CD8-positive, alpha-beta T cell (primary cell): ENCODE measurements at regions of chr22 and their contacts with region 1.

Region 1: DNA sequence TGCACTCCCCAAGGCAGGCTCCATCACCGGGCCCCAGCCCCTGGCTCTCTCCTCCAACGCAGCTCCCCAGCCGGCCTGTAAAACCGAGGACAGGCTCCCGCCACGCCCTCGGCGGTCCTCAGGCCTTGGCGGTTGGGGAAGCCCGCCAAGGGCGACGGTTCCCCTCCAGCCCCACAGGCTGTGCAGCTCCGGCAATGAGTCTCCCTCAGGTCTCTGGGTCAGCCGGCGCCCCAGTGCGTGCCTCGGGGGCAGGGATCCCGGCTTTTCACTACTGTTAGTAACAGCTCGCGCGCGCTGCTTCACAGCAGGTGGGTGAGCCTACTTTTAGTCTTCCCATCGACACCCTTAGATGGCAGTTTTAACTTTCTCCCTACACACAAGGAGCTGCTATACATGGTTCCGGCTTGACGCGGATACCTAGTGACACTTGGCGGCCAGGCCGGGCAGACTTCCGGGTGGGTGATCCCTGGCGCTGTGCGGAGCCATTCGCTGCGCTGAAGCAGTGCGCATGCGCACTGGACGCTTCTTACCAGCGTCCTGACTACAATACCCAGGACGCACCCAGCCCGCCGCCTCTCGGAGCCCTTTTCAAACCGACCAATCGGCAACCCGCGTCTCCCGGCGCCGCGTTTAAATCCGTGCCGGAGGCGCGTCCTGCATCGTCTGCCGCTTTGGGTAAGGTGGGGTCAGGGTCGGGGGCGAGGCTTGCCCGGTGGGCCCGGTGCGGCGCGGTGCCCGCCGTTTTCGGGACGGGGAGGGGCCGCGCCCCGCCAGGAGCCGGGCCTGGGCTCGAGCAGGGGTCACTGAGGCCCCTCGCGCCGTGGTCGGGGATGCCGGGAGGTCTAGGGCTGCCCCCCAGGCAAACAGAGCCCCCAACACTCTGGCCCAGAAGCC is at the start of gene GTSE1:
- DNase-seq: peak; percentile 94 to 100 (median 97)
- ATAC-seq: peak; percentile 97
- H3K4me3 ChIP-seq: peak within 1 kb of the TSS; percentile 61 to 63
- H3K4me3 Mint-ChIP-seq: peak within 1 kb of the TSS; percentile 89
- H3K27ac ChIP-seq: peak within 1 kb of the TSS; percentile 74 to 94
- H3K27ac Mint-ChIP-seq: peak within 1 kb of the TSS; percentile 98
- H3K4me1 ChIP-seq: peaks cover 24% of the 10 kb centered on the region
- H3K4me1 Mint-ChIP-seq: peaks cover 21% of the 10 kb centered on the region
- H3K27me3 ChIP-seq: no peaks in the 10 kb centered on the region
- H3K27me3 Mint-ChIP-seq: peaks cover 14% of the 10 kb centered on the region
- CTCF ChIP-seq: peak; percentile 29
- total RNA-seq, gene GTSE1: 0.19 to 0.30 TPM

Region 2: DNA sequence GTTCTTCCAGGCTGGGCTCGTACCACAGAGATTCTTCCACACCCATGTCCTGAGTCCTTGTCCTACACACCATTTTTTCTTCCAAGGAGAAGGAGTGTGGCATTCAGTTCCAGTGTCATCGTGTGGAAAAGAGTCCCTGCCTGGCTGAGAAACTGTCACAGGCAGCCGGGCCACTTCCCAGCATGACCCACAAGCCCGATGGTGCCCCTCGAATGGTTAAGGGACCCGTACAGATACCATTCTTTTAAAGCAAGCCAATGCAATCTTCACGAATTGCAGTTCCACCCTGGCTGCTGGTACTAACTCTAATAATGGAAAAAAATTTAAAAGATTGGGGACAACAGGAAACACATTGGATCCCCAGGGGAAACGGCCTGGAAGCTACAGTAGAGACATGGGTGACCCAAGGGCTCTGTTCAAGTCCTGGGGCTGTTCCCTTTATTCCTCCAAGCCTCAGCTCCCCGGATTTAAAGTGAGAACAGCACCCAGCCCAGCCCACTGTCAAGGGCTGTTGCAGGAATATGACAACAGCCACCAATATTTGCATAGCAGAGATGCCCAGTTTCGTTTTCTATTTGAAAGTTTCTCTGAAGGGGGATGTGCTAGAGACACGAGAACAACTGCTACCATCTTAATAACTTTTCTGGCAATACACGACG is 238.6 kb before region 1 on chr22:
- CTCF ChIA-PET with region 1: no interaction called
- POLR2A ChIA-PET with region 1: no interaction called
- intact Hi-C with region 1: loop called in 1 of 2 experiments (anchors 5 kb)
- DNase-seq: peak in 3 of 9 experiments; percentile 27 to 61 (median 44)
- ATAC-seq: peak; percentile 55
- H3K4me3 ChIP-seq: no peak overlapping the region
- H3K4me3 Mint-ChIP-seq: peak overlapping the region; percentile 54
- H3K27ac ChIP-seq: peak overlapping the region in 1 of 2 experiments; percentile 45
- H3K27ac Mint-ChIP-seq: peak overlapping the region; percentile 86
- H3K4me1 ChIP-seq: peaks cover 35% of the 10 kb centered on the region
- H3K4me1 Mint-ChIP-seq: peaks cover 38% of the 10 kb centered on the region
- H3K27me3 ChIP-seq: no peaks in the 10 kb centered on the region
- H3K27me3 Mint-ChIP-seq: peaks cover 7% of the 10 kb centered on the region
- CTCF ChIP-seq: no peak

Region 3: GRCh38 chr22:46150034-46150654 is 146.4 kb before region 1 on chr22 and contains the start of gene PPARA:
- CTCF ChIA-PET with region 1: no interaction called
- POLR2A ChIA-PET with region 1: interaction called, 4 read pairs
- intact Hi-C with region 1: loop called (anchors 1 kb)
- DNase-seq: peak; percentile 60 to 93 (median 89)
- ATAC-seq: peak; percentile 77
- H3K4me3 ChIP-seq: peak within 1 kb of the TSS; percentile 82 to 91
- H3K4me3 Mint-ChIP-seq: peak within 1 kb of the TSS; percentile 83
- H3K27ac ChIP-seq: peak within 1 kb of the TSS; percentile 46 to 60
- H3K27ac Mint-ChIP-seq: peak within 1 kb of the TSS; percentile 89
- H3K4me1 ChIP-seq: peaks cover 21% of the 10 kb centered on the region
- H3K4me1 Mint-ChIP-seq: peaks cover 20% of the 10 kb centered on the region
- H3K27me3 ChIP-seq: no peaks in the 10 kb centered on the region
- H3K27me3 Mint-ChIP-seq: no peaks in the 10 kb centered on the region
- CTCF ChIP-seq: no peak
- total RNA-seq, gene PPARA: 4.4 to 6.9 TPM

Region 4: DNA sequence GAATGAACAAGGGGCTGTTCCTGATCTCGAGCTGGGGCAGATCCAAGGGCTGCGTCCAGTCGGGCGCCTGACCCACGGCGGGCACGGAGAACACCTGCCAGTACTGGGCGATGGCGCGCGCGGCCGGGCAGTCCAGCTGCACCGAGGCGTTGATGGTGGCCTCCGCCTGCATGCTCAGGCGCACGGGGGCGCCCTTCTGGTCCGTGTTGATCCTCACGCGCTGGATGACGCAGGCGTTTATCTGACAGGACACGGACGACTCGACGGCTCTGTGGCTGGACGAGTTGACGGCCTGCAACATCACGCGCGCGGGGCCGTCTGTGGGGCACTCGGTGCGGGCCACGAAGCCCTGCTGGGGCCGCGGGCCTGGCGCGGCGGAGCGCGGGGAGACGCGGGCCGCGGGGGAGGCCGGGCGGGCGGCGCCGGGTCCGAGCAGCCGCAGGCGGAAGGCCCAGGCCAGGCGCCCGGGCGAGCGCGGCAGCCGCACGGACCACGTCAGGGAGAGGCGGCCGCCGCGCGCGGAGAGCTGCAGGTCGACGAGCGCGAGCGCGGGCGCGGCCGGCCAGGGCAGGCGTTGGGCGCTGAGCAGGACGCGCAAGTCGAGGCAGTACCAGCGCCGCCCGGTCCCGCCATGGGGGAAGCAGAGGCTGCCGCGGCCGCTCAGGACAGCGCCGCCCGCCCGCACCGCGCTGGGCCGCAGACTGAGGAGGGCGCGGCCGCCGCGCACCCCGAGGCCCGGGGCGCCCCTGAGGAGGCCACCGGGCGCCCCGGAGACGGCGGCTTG is 33.9 kb before region 1 on chr22:
- CTCF ChIA-PET with region 1: no interaction called
- POLR2A ChIA-PET with region 1: interaction called, 6 read pairs
- intact Hi-C with region 1: loop called (anchors 1 to 2 kb)
- DNase-seq: peak in 4 of 9 experiments; percentile 33 to 75 (median 53)
- ATAC-seq: peak; percentile 49
- H3K4me3 ChIP-seq: no peak overlapping the region
- H3K4me3 Mint-ChIP-seq: peak overlapping the region; percentile 51
- H3K27ac ChIP-seq: no peak overlapping the region
- H3K27ac Mint-ChIP-seq: no peak overlapping the region
- H3K4me1 ChIP-seq: peaks cover 3% of the 10 kb centered on the region
- H3K4me1 Mint-ChIP-seq: peaks cover 15% of the 10 kb centered on the region
- H3K27me3 ChIP-seq: peaks cover 0 to 4% of the 10 kb centered on the region in 2 experiments
- H3K27me3 Mint-ChIP-seq: peaks cover 45% of the 10 kb centered on the region
- CTCF ChIP-seq: no peak

Region 5: DNA sequence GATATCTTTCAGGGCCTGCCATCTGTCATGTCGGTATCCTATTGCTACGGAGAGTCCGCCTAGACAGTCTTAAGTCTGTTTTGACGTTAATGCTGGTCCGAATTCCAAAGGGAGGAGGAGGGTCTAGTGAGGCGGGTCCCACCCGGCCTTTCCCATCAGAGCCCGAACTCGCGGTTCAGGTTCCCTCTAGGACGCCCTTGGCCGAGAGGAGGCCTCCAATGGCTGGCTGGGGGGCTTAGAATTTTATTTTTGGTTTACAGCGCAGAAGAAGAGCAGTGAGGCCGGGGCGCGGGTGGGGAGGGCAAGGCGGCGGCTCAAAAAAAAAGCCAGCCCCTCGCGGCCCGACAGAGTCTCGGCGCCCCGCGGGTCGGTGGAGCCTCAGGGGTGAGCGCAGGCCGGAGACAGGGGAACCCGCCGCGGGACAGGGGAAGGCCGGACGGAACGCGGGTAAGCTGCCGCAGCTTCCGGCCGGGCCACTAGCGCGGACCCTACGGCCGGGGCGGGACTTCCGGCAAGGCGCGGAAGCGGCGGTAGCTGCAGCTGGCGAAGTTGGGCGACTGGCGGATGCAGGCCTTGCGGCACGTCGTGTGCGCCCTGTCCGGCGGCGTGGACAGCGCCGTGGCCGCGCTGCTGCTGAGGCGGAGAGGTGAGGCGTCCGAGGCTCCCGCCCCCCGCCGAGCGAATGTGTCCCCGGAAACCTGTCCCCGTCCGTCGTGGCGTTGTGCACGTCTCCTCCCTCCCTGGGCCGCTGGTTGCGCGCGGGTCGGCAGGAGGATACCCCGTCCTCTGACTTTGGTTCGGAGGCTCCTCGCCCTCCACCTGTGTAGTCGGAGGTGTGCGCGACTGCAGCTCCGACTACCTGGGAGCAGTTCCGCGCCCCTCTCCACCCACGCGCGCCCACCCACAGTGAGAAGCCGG is 39.0 kb after region 1 on chr22 and contains the start of gene TRMU:
- CTCF ChIA-PET with region 1: no interaction called
- POLR2A ChIA-PET with region 1: interaction called, 3 read pairs
- intact Hi-C with region 1: loop called (anchors 1 to 2 kb)
- DNase-seq: peak; percentile 29 to 86 (median 75)
- ATAC-seq: peak; percentile 80
- H3K4me3 ChIP-seq: peak within 1 kb of the TSS; percentile 80 to 94
- H3K4me3 Mint-ChIP-seq: peak within 1 kb of the TSS; percentile 95
- H3K27ac ChIP-seq: peak within 1 kb of the TSS; percentile 68 to 86
- H3K27ac Mint-ChIP-seq: peak within 1 kb of the TSS; percentile 91
- H3K4me1 ChIP-seq: peaks cover 16% of the 10 kb centered on the region
- H3K4me1 Mint-ChIP-seq: peaks cover 39% of the 10 kb centered on the region
- H3K27me3 ChIP-seq: no peaks in the 10 kb centered on the region
- H3K27me3 Mint-ChIP-seq: no peaks in the 10 kb centered on the region
- CTCF ChIP-seq: no peak
- total RNA-seq, gene TRMU: 51.0 to 56.3 TPM